Right ventricle myocardium superior (tissue), 1 donor: ENCODE measurements at regions of chr3 and their contacts with region 1.

Region 1: DNA sequence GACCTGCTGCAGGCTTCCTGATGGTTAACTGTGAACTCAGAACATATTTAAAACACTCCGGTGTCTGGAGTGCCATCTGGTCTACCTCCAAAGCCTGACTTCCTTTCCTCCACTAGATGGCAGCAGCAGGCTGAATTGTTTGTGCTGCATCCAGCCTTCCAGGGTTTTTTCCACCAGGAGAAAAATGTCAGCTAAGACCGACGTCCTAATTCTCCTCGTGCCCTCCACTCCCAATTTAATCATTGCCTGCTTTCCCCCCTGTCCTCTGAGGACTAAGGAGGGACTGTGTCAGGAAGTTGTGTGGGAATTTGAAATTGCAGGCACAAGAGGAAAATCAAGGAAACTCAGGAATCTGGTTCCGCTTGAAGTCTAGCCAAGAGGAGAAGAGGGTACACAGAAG is 165.2 kb upstream of the UMPS start:
- DNase-seq: peak; percentile 70
- ATAC-seq: peak; percentile 81

Region 2: DNA sequence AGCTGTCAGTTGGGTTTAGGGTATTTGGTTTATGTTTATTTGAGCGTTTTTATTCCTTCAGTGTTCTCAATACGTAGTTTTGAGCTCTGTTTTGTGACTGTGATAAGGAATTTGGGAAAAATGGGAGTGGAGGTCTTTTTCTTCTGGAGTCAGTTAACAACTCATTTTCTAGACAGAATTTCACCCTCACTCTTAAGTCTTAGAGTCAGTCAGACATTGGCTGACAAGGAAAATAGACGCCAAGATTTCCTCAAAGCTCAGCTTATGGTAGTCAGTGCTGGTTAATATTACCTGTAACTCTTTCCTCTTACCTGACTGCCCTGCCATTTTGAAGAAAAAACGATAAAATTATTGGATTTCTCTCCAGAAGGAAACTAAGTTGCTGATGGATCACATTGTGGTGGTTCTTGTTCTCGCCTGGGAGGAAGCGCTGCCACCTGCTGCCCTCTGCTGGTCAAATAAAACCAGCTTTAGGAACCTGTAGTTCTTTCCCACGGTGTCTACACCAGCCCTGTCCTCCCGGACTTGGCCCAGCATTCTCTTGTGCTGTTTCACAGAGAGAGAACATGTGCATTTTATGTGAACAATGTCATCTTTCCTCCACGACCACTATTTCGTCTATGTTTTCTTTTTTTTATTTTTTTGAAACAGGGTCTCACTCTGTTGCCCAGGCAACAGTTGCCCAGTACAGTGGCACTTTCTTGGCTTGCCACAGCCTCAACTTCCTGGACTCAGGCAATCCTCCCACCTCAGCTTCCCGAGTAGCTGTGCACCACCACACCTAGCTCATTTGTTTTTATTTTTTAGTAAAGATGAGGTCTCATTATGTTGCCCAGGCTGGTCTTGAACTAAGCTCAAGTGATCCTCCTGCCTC is 123.8 kb after region 1 on chr3:
- intact Hi-C with region 1: loop called (anchors 2 kb)
- DNase-seq: peak; percentile 80
- ATAC-seq: peak; percentile 87

Region 3: DNA sequence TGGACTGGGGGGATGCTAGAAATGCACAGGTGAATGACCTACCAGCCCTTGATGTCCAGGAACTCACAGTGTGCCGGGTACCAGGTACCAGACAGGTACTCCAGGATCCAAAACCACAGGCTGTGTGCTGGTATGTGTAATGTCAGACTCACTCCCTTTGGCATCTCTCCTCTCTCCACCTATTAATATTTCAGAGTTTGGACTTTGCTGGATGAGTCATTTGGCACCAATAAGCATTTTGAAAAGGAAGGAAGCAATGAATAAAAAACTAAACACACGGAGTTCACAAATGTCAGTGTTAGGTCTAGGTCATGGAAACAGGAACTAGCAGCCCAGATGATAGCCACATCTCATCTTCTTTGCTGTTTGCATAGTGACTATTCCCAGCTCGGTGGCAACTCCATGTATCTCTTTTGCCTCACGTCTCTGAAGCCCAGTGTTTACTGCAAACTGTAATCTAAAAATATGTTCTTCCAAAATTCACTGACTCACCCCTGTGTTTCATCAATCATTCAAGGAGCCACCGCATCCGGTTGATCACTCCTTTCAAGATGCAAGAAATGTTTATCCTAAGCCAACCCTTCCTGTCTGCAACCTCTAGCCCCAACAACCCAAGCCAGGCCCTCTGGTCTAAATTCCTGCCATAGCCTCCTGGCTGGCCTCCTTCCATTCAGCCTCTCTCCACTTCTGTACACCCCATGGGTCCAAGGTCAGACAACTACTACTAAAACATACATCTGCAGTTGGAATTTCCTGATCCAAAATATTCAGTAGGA is 313.7 kb after region 1 on chr3:
- intact Hi-C with region 1: no loop called
- DNase-seq: no peak
- ATAC-seq: peak; percentile 75